K562 (cell line): ENCODE measurements at regions of chr4 and their contacts with region 1.

Region 1: GRCh38 chr4:5050520-5051277 is 581 bp upstream of the STK32B start:
- DNase-seq: peak; percentile 62 to 77 (median 68)
- ATAC-seq: peak; percentile 93
- H3K4me3 ChIP-seq: peak overlapping the region; percentile 17; the same call in 1 of the 2 replicates
- H3K27ac ChIP-seq: no peak overlapping the region
- H3K4me1 ChIP-seq: peaks cover 7 to 22% of the 10 kb centered on the region in 2 experiments; a peak in 3 of 5 replicates
- H3K27me3 ChIP-seq: peaks cover 0 to 5% of the 10 kb centered on the region in 2 experiments; a peak in 1 of 5 replicates
- CTCF ChIP-seq: peak; percentile 69 to 74 (median 70)
- EP300 ChIP-seq: no peak
- POLR2A ChIP-seq: no peak
- RAD21 ChIP-seq: peak; percentile 64 to 75

Region 2: DNA sequence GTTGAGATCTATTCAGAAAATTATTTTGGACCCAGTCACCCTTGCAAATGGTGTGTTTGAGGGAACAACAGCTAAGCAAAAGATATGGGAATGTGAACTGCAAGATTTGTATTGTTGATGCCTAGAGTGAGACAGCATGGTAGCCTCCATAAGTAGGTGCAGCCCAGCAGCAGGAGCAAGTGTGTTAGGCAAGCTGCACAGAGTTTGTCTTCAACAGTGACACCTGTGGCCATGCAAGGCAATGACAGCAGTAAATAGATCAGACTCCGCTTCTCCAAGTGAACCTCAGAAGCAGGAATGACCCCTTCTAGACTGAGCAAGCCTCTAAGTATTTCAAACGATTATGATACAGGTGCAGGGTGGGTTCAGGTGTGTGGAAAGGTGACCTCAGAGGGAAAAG is 324.6 kb before region 1 on chr4:
- CTCF ChIA-PET with region 1: no interaction called
- POLR2A ChIA-PET with region 1: no interaction called
- in situ Hi-C with region 1: no loop called
- intact Hi-C with region 1: no loop called
- DNase-seq: peak; percentile 14 to 48 (median 24)
- ATAC-seq: peak; percentile 39; the same call in 1 of the 3 replicates
- H3K4me3 ChIP-seq: no peak overlapping the region
- H3K27ac ChIP-seq: no peak overlapping the region
- H3K4me1 ChIP-seq: no peaks in the 10 kb centered on the region
- H3K27me3 ChIP-seq: peaks cover 0 to 8% of the 10 kb centered on the region in 2 experiments; a peak in 1 of 5 replicates
- CTCF ChIP-seq: peak; percentile 38 to 55 (median 44)
- EP300 ChIP-seq: no peak
- POLR2A ChIP-seq: no peak
- RAD21 ChIP-seq: no peak

Region 3: DNA sequence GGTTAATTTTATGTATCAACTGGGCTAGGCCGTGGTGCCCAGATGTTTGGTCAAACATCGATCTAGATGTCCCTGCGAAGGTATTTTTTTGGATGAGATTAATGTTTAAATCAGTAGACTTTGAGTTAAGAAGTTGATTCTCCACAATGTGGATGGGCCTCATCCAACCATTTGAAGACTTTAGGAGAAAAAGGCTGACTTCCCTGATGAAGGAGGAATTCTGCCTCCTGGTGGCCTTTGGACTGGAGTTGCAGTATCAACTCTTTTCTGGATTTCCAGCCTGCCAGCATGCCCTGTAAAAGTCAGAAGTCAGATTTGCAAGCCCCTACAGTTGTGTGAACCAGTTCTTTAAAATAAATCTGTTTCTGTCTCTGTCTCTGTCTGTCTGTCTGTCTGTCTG is 92.0 kb after region 1 on chr4:
- CTCF ChIA-PET with region 1: interaction called, 3 read pairs
- POLR2A ChIA-PET with region 1: no interaction called
- in situ Hi-C with region 1: no loop called
- intact Hi-C with region 1: loop called (anchors 2 kb)
- DNase-seq: peak; percentile 26 to 51 (median 36)
- ATAC-seq: peak; percentile 70
- H3K4me3 ChIP-seq: no peak overlapping the region
- H3K27ac ChIP-seq: no peak overlapping the region
- H3K4me1 ChIP-seq: peaks cover 3 to 13% of the 10 kb centered on the region in 2 experiments; a peak in 2 of 5 replicates
- H3K27me3 ChIP-seq: peaks cover 0 to 10% of the 10 kb centered on the region in 2 experiments; a peak in 2 of 5 replicates
- CTCF ChIP-seq: peak; percentile 51 to 70 (median 58); a peak in 5 of 6 replicates
- EP300 ChIP-seq: no peak
- POLR2A ChIP-seq: no peak
- RAD21 ChIP-seq: peak; percentile 41 to 74

Region 4: DNA sequence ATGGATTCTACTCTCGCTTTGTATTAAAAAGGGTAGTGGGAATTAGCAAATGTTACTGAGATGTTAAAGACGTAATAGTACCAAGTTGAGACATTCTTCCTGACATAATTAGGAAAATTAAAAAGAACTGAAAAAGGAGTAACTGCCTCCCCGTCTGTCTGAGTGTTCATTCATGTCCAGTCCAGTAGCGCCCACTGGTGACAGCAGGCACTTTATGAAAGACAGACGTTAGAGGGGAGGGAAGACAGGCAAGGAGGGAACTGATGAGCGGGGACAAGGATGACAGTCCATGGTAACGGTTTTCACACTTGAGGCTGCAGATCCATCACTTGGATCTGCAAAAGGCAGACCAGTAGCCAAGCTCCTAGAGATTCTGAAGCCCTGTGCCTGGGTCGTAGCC is 327.3 kb after region 1 on chr4:
- CTCF ChIA-PET with region 1: interaction called, 6 read pairs
- POLR2A ChIA-PET with region 1: no interaction called
- in situ Hi-C with region 1: no loop called
- intact Hi-C with region 1: loop called (anchors 5 kb)
- DNase-seq: peak; percentile 39 to 51 (median 46)
- ATAC-seq: peak; percentile 78
- H3K4me3 ChIP-seq: no peak overlapping the region
- H3K27ac ChIP-seq: no peak overlapping the region
- H3K4me1 ChIP-seq: no peaks in the 10 kb centered on the region
- H3K27me3 ChIP-seq: no peaks in the 10 kb centered on the region; a peak in 1 of 5 replicates
- CTCF ChIP-seq: peak; percentile 62 to 77 (median 68)
- EP300 ChIP-seq: no peak
- POLR2A ChIP-seq: no peak
- RAD21 ChIP-seq: peak; percentile 49 to 68